CD4-positive, alpha-beta memory T cell (primary cell): ENCODE measurements at regions of chr3 and their contacts with region 1.

Region 1: GRCh38 chr3:52056968-52057805 is 816 bp upstream of the DUSP7 start:
- DNase-seq: peak; percentile 99 to 100 (median 99)
- H3K4me3 ChIP-seq: peak overlapping the region; percentile 90 to 97
- H3K4me3 Mint-ChIP-seq: peak overlapping the region; percentile 83 to 96 (median 92)
- H3K27ac ChIP-seq: peak overlapping the region; percentile 82
- H3K27ac Mint-ChIP-seq: peak overlapping the region; percentile 92 to 98 (median 96)
- H3K4me1 ChIP-seq: peaks cover 41% of the 10 kb centered on the region
- H3K4me1 Mint-ChIP-seq: peaks cover 20 to 44% (median 30%) of the 10 kb centered on the region in 4 donors
- H3K27me3 ChIP-seq: no peaks in the 10 kb centered on the region
- H3K27me3 Mint-ChIP-seq: no peaks in the 10 kb centered on the region

Region 2: DNA sequence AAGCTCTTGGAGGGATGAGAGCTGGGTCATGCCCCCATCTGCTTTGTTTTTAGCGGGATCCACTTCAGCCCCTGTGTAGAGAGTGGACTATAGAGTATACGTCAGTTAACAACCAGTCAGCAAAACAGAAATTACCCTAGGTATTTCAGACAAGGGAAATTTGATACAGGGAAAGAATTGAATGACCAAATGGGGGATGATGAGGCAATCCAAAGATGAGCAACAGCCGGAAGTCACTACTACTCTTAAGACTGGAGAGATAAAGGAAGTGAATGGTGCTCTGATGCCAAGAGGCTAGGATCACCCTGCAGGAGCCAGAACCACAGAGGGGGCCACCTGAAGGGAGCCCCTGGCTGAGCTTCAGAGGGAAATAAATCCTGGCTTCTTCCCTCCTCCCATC is 103.7 kb before region 1 on chr3:
- CTCF ChIA-PET with region 1: no interaction called
- POLR2A ChIA-PET with region 1: no interaction called
- intact Hi-C with region 1: no loop called
- DNase-seq: no peak
- H3K4me3 ChIP-seq: no peak overlapping the region
- H3K4me3 Mint-ChIP-seq: no peak overlapping the region
- H3K27ac ChIP-seq: no peak overlapping the region
- H3K27ac Mint-ChIP-seq: no peak overlapping the region
- H3K4me1 ChIP-seq: peaks cover 15% of the 10 kb centered on the region
- H3K4me1 Mint-ChIP-seq: peaks cover 0 to 8% (median 4%) of the 10 kb centered on the region in 4 donors
- H3K27me3 ChIP-seq: peaks cover 8% of the 10 kb centered on the region
- H3K27me3 Mint-ChIP-seq: peaks cover 5 to 12% of the 10 kb centered on the region in 2 donors

Region 3: GRCh38 chr3:51982782-51983577 is 74.2 kb before region 1 on chr3 and contains the start of gene ACY1:
- CTCF ChIA-PET with region 1: interaction called, 4 read pairs
- POLR2A ChIA-PET with region 1: interaction called, 20 read pairs
- intact Hi-C with region 1: no loop called
- DNase-seq: peak; percentile 54 to 83 (median 60)
- H3K4me3 ChIP-seq: peak within 1 kb of the TSS; percentile 36 to 55
- H3K4me3 Mint-ChIP-seq: peak within 1 kb of the TSS; percentile 90 to 97 (median 94)
- H3K27ac ChIP-seq: peak within 1 kb of the TSS; percentile 77
- H3K27ac Mint-ChIP-seq: peak within 1 kb of the TSS; percentile 84 to 98 (median 94)
- H3K4me1 ChIP-seq: peaks cover 26% of the 10 kb centered on the region
- H3K4me1 Mint-ChIP-seq: peaks cover 7 to 29% (median 24%) of the 10 kb centered on the region in 4 donors
- H3K27me3 ChIP-seq: no peaks in the 10 kb centered on the region
- H3K27me3 Mint-ChIP-seq: no peaks in the 10 kb centered on the region
- total RNA-seq, gene ACY1: 7.7 to 8.4 TPM

Region 4: DNA sequence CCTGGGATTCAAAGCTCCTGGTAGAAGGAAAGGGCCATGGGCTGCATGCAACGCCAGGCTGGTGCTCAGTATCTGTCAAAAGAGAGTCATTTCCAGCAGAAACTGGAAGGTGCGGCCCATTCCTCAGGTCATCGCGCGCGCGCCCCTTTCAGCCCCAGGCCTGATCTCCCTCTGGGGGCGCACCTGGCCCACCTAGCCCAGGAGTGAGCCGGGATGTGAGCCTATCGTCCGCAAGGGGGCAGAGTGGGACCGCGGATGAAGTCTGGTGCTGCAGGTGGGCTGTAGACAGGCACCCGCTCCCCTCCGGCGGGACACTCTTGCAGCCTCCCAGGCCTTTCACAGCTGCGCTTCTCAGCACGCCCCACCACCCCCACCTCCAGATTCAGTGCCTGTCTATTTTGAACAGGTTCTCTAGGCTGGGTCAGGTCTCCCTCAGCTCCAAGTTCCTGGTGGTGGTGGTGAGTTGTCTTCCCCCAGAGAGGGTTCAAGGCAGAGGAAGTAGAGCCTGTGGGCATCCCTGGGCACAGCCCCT is 55.7 kb before region 1 on chr3:
- CTCF ChIA-PET with region 1: interaction called, 97 read pairs
- POLR2A ChIA-PET with region 1: interaction called, 45 read pairs
- intact Hi-C with region 1: loop called (anchors 1 kb)
- DNase-seq: peak; percentile 81 to 86 (median 84)
- H3K4me3 ChIP-seq: no peak overlapping the region
- H3K4me3 Mint-ChIP-seq: peak overlapping the region in 5 of 8 donors; percentile 4 to 26 (median 8)
- H3K27ac ChIP-seq: no peak overlapping the region
- H3K27ac Mint-ChIP-seq: peak overlapping the region in 4 of 7 donors; percentile 46 to 80 (median 60)
- H3K4me1 ChIP-seq: peaks cover 21% of the 10 kb centered on the region
- H3K4me1 Mint-ChIP-seq: peaks cover 3 to 22% (median 12%) of the 10 kb centered on the region in 4 donors
- H3K27me3 ChIP-seq: no peaks in the 10 kb centered on the region
- H3K27me3 Mint-ChIP-seq: no peaks in the 10 kb centered on the region

Region 5: GRCh38 chr3:52123106-52123725 is 66.0 kb after region 1 on chr3:
- CTCF ChIA-PET with region 1: interaction called, 26 read pairs
- POLR2A ChIA-PET with region 1: interaction called, 7 read pairs
- intact Hi-C with region 1: loop called (anchors 1 kb)
- DNase-seq: peak; percentile 66 to 79 (median 70)
- H3K4me3 ChIP-seq: no peak overlapping the region
- H3K4me3 Mint-ChIP-seq: no peak overlapping the region
- H3K27ac ChIP-seq: no peak overlapping the region
- H3K27ac Mint-ChIP-seq: no peak overlapping the region
- H3K4me1 ChIP-seq: no peaks in the 10 kb centered on the region
- H3K4me1 Mint-ChIP-seq: no peaks in the 10 kb centered on the region
- H3K27me3 ChIP-seq: no peaks in the 10 kb centered on the region
- H3K27me3 Mint-ChIP-seq: no peaks in the 10 kb centered on the region

Region 6: GRCh38 chr3:52154117-52155094 is 97.2 kb after region 1 on chr3 and contains the start of gene POC1A:
- CTCF ChIA-PET with region 1: interaction called, 3 read pairs
- POLR2A ChIA-PET with region 1: interaction called, 46 read pairs
- intact Hi-C with region 1: loop called (anchors 1 kb)
- DNase-seq: peak; percentile 83 to 90 (median 85)
- H3K4me3 ChIP-seq: peak within 1 kb of the TSS; percentile 93 to 95
- H3K4me3 Mint-ChIP-seq: peak within 1 kb of the TSS; percentile 93 to 98 (median 97)
- H3K27ac ChIP-seq: peak within 1 kb of the TSS; percentile 74
- H3K27ac Mint-ChIP-seq: peak within 1 kb of the TSS; percentile 95 to 98 (median 98)
- H3K4me1 ChIP-seq: peaks cover 13% of the 10 kb centered on the region
- H3K4me1 Mint-ChIP-seq: peaks cover 3 to 15% (median 8%) of the 10 kb centered on the region in 4 donors
- H3K27me3 ChIP-seq: no peaks in the 10 kb centered on the region
- H3K27me3 Mint-ChIP-seq: no peaks in the 10 kb centered on the region
- total RNA-seq, gene POC1A: 0.99 to 1.1 TPM